MCF 10A (cell line): ENCODE measurements at regions of chr2 and their contacts with region 1.

Region 1: DNA sequence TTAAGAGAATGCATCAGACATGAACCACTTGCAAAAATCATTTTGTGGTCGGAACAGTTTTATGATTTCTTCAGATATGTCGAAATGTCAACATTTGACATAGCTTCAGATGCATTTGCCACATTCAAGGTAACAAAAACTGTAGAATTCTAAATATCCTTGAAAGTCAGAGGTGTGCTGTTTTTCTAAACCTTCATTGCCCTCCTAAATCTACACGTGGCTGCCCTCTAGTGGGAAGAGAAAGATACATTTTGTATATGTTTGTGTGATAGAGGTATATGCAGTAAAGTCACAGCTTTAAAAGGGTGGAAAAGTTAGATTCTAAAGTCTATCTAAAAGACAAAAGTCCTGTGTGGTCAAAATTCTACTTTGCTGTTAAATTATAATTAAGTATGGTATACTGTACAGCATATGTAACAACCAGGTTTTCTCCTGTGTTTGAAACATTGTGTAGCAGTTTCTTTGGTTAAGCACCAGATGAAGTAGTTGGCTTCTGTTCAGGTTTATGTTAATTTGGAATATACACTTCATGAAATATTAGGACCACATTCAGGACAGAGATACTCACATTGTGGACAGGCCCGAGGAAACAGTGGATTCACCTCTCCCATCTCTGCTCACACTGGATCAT is 65.9 kb upstream of the ITM2C start:
- DNase-seq: peak; percentile 85
- H3K4me3 Mint-ChIP-seq: no peak overlapping the region
- H3K27ac Mint-ChIP-seq: no peak overlapping the region
- H3K4me1 Mint-ChIP-seq: peaks cover 9% of the 10 kb centered on the region
- H3K27me3 Mint-ChIP-seq: no peaks in the 10 kb centered on the region
- CTCF ChIP-seq: peak; percentile 75

Region 2: DNA sequence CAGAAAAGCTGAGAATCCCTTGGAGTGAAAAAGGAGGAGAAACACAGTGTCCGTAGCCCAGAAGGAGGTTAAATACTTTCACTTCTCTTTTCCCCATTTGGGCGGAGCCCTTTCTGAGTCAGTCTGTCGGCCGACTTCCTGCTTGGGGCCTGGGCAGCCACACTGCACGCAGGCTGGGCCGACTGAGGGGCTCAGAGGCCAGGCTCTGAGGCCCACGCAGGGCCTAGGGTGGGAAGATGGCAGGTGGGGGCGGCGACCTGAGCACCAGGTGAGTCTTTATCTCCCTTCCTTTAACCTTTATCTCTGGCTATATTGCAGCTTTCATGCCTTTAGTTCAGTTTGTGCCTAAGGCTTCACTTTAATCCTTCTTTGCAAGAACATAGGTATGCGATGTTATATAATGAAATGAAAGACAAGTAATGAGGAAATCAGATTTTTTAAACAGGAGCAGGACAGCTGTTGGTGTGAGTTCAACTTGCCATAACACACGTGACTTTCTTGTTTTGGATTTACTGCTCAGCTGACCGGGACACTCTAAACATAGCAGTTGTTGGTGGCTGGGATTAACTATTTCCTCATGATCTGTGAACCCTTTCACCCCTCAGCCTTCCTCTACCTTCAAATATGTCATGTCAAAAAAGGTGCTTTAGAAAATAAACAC is 382.7 kb before region 1 on chr2 and contains the start of gene SP100:
- CTCF ChIA-PET with region 1: no interaction called
- POLR2A ChIA-PET with region 1: interaction called, 4 read pairs
- intact Hi-C with region 1: loop called (anchors 5 kb)
- DNase-seq: peak; percentile 86
- H3K4me3 Mint-ChIP-seq: peak within 1 kb of the TSS; percentile 89
- H3K27ac Mint-ChIP-seq: peak within 1 kb of the TSS; percentile 98
- H3K4me1 Mint-ChIP-seq: peaks cover 46% of the 10 kb centered on the region
- H3K27me3 Mint-ChIP-seq: no peaks in the 10 kb centered on the region
- CTCF ChIP-seq: no peak
- total RNA-seq, gene SP100: 54.5 and 56.9 TPM in 2 replicates

Region 3: GRCh38 chr2:230751062-230751461 is 47.8 kb before region 1 on chr2:
- CTCF ChIA-PET with region 1: interaction called, 3 read pairs
- POLR2A ChIA-PET with region 1: interaction called, 12 read pairs
- intact Hi-C with region 1: loop called (anchors 5 kb)
- DNase-seq: peak; percentile 48
- H3K4me3 Mint-ChIP-seq: no peak overlapping the region
- H3K27ac Mint-ChIP-seq: peak overlapping the region; percentile 31
- H3K4me1 Mint-ChIP-seq: peaks cover 35% of the 10 kb centered on the region
- H3K27me3 Mint-ChIP-seq: no peaks in the 10 kb centered on the region
- CTCF ChIP-seq: no peak

Region 4: GRCh38 chr2:230774348-230774951 is 24.4 kb before region 1 on chr2:
- CTCF ChIA-PET with region 1: interaction called, 6 read pairs
- POLR2A ChIA-PET with region 1: interaction called, 193 read pairs
- intact Hi-C with region 1: loop called (anchors 1 kb)
- DNase-seq: peak; percentile 75
- H3K4me3 Mint-ChIP-seq: peak overlapping the region; percentile 13
- H3K27ac Mint-ChIP-seq: peak overlapping the region; percentile 87
- H3K4me1 Mint-ChIP-seq: peaks cover 47% of the 10 kb centered on the region
- H3K27me3 Mint-ChIP-seq: no peaks in the 10 kb centered on the region
- CTCF ChIP-seq: no peak

Region 5: DNA sequence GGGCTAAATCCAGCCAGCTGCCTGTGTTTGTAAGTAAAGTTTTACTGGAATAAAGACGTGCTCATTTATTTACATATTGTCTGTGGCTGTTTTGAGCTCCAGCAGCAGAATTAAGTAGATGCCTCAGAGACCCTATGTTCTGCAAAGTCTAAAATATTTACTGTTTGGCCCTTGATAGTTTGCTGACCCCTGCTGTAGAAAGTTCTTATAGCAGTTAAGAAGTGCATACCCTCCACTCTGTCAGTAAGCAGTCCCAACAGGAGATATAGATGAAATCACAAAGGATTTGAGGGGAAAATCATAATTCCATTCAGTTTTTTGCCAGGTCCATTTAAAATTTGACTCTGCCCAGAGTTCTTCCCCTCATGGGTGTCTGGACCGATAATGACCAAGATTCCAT is 15.7 kb after region 1 on chr2:
- CTCF ChIA-PET with region 1: interaction called, 13 read pairs
- POLR2A ChIA-PET with region 1: interaction called, 3 read pairs
- intact Hi-C with region 1: no loop called
- DNase-seq: peak; percentile 30
- H3K4me3 Mint-ChIP-seq: no peak overlapping the region
- H3K27ac Mint-ChIP-seq: no peak overlapping the region
- H3K4me1 Mint-ChIP-seq: no peaks in the 10 kb centered on the region
- H3K27me3 Mint-ChIP-seq: no peaks in the 10 kb centered on the region
- CTCF ChIP-seq: peak; percentile 28

Region 6: GRCh38 chr2:230852113-230852512 is 53.2 kb after region 1 on chr2:
- CTCF ChIA-PET with region 1: no interaction called
- POLR2A ChIA-PET with region 1: no interaction called
- intact Hi-C with region 1: no loop called
- DNase-seq: no peak
- H3K4me3 Mint-ChIP-seq: no peak overlapping the region
- H3K27ac Mint-ChIP-seq: no peak overlapping the region
- H3K4me1 Mint-ChIP-seq: peaks cover 11% of the 10 kb centered on the region
- H3K27me3 Mint-ChIP-seq: peaks cover 61% of the 10 kb centered on the region
- CTCF ChIP-seq: no peak

Region 7: GRCh38 chr2:231007286-231008007 is 208.6 kb after region 1 on chr2:
- CTCF ChIA-PET with region 1: no interaction called
- POLR2A ChIA-PET with region 1: no interaction called
- intact Hi-C with region 1: no loop called
- DNase-seq: no peak
- H3K4me3 Mint-ChIP-seq: no peak overlapping the region
- H3K27ac Mint-ChIP-seq: no peak overlapping the region
- H3K4me1 Mint-ChIP-seq: no peaks in the 10 kb centered on the region
- H3K27me3 Mint-ChIP-seq: peaks cover 59% of the 10 kb centered on the region
- CTCF ChIP-seq: no peak